ENCODE measurements at regions of chr2 and their contacts with region 1.

Region 1: DNA sequence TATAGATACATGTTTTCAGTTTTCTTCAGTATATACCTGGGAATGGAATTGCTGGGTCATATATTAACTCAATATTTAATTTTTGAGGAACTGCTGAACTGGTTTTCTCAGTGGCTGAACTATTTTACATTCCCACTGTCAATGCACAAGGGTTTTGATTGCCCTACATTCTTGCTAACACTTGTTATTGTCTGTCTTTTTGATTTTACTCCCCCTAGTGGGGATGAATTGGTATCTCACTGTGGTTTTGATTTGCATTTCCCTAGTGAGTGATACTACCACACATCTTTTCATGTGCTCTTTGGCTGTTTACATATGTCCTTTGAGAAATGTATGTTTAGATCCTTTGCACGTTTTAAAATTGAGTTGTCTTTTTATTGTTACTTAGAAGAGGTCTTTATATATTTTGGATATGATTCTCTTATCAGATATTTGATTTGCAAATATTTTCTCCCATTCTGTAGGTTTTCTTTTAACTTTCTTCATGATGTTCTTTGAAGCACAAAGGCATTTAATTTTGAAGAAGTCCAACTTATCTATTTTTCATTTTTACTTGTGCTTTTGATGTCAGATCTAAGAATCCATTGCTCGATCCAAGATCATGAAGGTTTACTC is 36.2 kb downstream of the ASB1 start:
- DNase-seq: no peak
- ATAC-seq: no peak
- H3K4me3 ChIP-seq: no peak overlapping the region
- H3K27ac ChIP-seq: no peak overlapping the region
- H3K4me1 ChIP-seq: peaks cover 17 to 26% of the 10 kb centered on the region in 2 donors
- H3K27me3 ChIP-seq: no peaks in the 10 kb centered on the region
- CTCF ChIP-seq: peak; percentile 56 to 68 (median 63)
- POLR2A ChIP-seq: no peak

Region 2: DNA sequence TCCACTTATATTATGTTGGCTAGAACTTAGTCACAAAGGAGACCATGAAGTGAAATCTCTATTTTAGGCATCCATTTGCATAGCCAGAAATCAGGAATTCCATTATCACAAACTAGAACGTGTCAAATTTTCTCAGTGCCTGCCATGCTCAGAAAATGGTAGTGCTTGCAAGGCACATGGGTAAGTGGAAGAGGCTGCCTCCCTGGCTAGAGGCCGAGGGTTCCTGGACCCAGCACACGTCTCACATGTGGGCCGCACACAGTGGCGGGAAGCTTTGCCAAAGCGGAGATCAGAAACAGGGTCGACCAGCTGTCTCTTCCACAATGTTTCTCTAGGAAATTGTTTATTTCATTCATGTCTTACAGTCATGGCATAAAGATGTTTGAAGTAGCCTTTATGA is 100.3 kb before region 1 on chr2:
- in situ Hi-C with region 1: loop called (anchors 5 to 25 kb)
- intact Hi-C with region 1: loop called (anchors 1 kb)
- DNase-seq: no peak
- ATAC-seq: no peak
- H3K4me3 ChIP-seq: no peak overlapping the region
- H3K27ac ChIP-seq: no peak overlapping the region
- H3K4me1 ChIP-seq: peaks cover 0 to 3% of the 10 kb centered on the region in 2 donors
- H3K27me3 ChIP-seq: no peaks in the 10 kb centered on the region
- CTCF ChIP-seq: no peak
- POLR2A ChIP-seq: no peak

Region 3: GRCh38 chr2:238370823-238371372 is 92.0 kb before region 1 on chr2:
- in situ Hi-C with region 1: loop called (anchors 5 to 25 kb)
- intact Hi-C with region 1: loop called (anchors 2 kb)
- DNase-seq: no peak
- ATAC-seq: peak; percentile 70 to 74
- H3K4me3 ChIP-seq: no peak overlapping the region
- H3K27ac ChIP-seq: no peak overlapping the region
- H3K4me1 ChIP-seq: peaks cover 0 to 3% of the 10 kb centered on the region in 2 donors
- H3K27me3 ChIP-seq: no peaks in the 10 kb centered on the region
- CTCF ChIP-seq: peak; percentile 60 to 74 (median 68)
- POLR2A ChIP-seq: no peak

Region 4: DNA sequence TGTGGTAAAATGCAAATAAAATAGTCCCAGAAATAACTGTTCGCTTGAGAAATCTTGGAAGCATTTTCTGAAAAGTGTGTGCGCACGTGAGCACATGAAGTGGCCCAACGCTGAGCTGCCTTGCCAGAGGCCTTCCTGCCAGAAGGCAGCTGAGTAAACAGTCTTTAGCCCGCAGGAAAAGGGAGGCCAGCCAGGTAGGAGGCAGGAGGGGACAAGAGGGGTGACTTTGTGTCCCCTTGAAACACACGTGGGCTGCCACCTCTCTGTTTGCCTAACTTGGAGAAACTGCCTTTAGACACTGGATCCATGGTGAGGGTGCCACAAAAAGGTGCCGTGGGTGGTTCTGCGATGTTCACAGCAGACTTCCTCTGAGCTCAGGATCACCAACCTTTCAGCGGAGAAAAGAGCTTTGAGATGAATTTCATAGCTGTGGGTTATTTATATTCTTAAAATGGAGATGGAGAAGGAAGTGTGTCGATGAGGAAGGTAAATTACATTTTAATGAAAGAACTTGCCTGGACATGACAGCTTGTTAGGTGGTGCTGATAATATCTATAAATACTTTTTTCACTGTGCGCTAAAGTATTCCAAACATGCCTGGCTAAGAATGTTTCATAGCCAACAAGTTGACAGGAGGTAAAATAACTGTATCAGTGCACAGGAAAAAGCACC is 72.8 kb before region 1 on chr2:
- in situ Hi-C with region 1: no loop called
- intact Hi-C with region 1: loop called (anchors 2 kb)
- DNase-seq: peak; percentile 65 to 71
- ATAC-seq: peak; percentile 85 to 95
- H3K4me3 ChIP-seq: no peak overlapping the region
- H3K27ac ChIP-seq: peak overlapping the region; percentile 71 to 78 (median 76)
- H3K4me1 ChIP-seq: peaks cover 11 to 22% of the 10 kb centered on the region in 2 donors
- H3K27me3 ChIP-seq: no peaks in the 10 kb centered on the region
- CTCF ChIP-seq: no peak
- POLR2A ChIP-seq: no peak

Region 5: GRCh38 chr2:238449909-238450417 is 12.9 kb before region 1 on chr2:
- in situ Hi-C with region 1: no loop called
- intact Hi-C with region 1: loop called (anchors 1 kb)
- DNase-seq: peak; percentile 89 to 95
- ATAC-seq: peak; percentile 94 to 98
- H3K4me3 ChIP-seq: peak overlapping the region in 2 of 4 donors; percentile 15 to 17
- H3K27ac ChIP-seq: peak overlapping the region; percentile 76 to 87 (median 82)
- H3K4me1 ChIP-seq: peaks cover 19 to 21% of the 10 kb centered on the region in 2 donors
- H3K27me3 ChIP-seq: no peaks in the 10 kb centered on the region
- CTCF ChIP-seq: no peak
- POLR2A ChIP-seq: no peak

Region 6: DNA sequence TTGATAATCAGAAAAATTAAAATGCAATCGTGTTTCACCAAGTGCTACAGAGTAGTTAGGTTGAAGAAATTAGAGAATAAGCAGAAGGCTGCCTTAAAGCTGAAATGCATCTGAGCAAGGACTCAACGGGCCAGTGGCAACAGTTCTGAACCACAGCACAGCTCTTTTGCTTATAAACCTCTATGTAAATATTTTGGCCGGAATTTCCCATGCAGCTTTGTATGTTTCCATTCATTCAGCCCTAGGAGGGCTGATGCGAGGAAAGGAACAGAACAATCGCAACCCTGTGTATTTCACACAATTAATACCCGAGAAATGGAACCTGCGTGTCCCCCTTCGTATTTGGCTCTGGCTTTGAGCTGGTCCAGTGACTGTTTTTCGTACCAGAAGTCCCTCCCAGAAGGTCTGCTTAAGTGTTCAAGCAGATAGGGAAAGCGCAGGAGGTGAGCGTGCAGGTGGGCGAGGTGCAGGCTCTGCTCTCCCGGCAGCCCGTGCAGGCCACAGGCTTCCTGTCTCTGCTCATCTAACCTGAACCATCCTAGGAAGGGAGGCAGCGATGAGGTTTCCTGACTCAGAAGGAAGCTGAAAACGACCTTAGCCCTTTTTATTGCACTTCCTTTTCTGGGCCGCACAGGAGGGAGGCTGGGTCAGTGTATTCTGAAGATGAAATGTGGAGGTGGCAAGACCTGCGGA is 31.1 kb after region 1 on chr2:
- in situ Hi-C with region 1: no loop called
- intact Hi-C with region 1: no loop called
- DNase-seq: no peak
- ATAC-seq: no peak
- H3K4me3 ChIP-seq: no peak overlapping the region
- H3K27ac ChIP-seq: no peak overlapping the region
- H3K4me1 ChIP-seq: no peaks in the 10 kb centered on the region
- H3K27me3 ChIP-seq: peaks cover 0 to 3% (median 0%) of the 10 kb centered on the region in 3 donors
- CTCF ChIP-seq: no peak
- POLR2A ChIP-seq: no peak

Region 7: DNA sequence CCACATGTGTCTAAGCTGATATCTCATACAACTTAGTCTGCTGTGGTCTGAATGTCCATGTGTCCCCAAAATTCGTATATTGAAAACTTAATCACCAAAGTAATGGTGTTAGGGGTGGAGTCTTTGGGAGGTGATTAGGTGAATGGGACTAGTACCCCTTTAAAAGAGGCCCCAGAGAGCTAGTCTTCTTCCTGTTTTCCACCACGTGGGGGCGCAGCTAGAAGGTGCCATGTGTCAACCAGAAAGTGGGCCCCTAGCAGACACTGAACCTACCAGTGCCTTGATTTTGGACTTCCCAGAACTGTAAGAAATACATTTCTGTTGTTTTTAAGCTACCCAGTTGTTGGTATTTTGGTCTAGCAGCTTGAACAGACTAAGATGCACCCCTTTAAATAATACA is 50.5 kb after region 1 on chr2:
- in situ Hi-C with region 1: no loop called
- intact Hi-C with region 1: no loop called
- DNase-seq: no peak
- ATAC-seq: no peak
- H3K4me3 ChIP-seq: no peak overlapping the region
- H3K27ac ChIP-seq: no peak overlapping the region
- H3K4me1 ChIP-seq: no peaks in the 10 kb centered on the region
- H3K27me3 ChIP-seq: peaks cover 0 to under 1% (median 0%) of the 10 kb centered on the region in 3 donors
- CTCF ChIP-seq: peak; percentile 10 to 36 (median 32)
- POLR2A ChIP-seq: no peak

Region 8: GRCh38 chr2:238596571-238597551 is 134.0 kb after region 1 on chr2:
- in situ Hi-C with region 1: no loop called
- intact Hi-C with region 1: loop called (anchors 5 kb)
- DNase-seq: peak; percentile 71 to 77
- ATAC-seq: peak; percentile 86 to 87
- H3K4me3 ChIP-seq: peak overlapping the region in 2 of 4 donors; percentile 21 to 28
- H3K27ac ChIP-seq: peak overlapping the region; percentile 67 to 86 (median 76)
- H3K4me1 ChIP-seq: peaks cover 23 to 34% of the 10 kb centered on the region in 2 donors
- H3K27me3 ChIP-seq: no peaks in the 10 kb centered on the region
- CTCF ChIP-seq: no peak
- POLR2A ChIP-seq: peak; percentile 27 to 33

Measured in gastrocnemius medialis (tissue), 4 donors.